CD4-positive, alpha-beta memory T cell (primary cell): ENCODE measurements at regions of chr19 and their contacts with region 1.

Region 1: DNA sequence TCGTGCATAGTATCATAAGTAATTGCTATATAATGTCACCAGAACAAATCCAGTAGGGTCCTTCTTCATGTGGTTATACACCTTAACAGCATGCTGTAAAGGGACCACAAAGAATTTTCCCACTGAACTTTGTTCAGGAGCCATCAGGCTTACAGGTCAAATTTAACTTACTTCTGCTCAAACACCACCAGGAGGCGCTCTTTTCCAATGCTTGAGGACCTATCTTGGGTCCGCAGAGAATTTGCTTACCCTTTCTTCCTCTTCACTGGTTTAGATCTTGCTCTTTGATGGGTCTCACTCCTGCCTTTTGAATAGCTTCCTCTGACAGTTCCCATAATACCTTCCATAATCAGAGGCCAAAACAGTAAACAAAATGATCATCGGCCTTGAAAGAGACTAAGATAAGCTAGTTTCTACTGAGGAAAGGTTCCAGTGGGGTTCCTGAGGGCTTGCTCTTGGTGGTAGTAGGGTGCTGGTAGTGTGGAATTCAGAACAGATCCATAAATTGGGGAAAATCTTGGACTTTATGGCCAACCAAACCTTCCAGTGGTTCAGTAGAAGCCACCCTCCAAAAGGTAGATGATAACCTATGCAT is 37.4 kb downstream of the SCGB2B2 start:
- DNase-seq: peak; percentile 52 to 66 (median 62)
- H3K4me3 ChIP-seq: no peak overlapping the region
- H3K4me3 Mint-ChIP-seq: no peak overlapping the region
- H3K27ac ChIP-seq: no peak overlapping the region
- H3K27ac Mint-ChIP-seq: no peak overlapping the region
- H3K4me1 ChIP-seq: no peaks in the 10 kb centered on the region
- H3K4me1 Mint-ChIP-seq: peaks cover 0 to 3% (median 0%) of the 10 kb centered on the region in 4 donors
- H3K27me3 ChIP-seq: no peaks in the 10 kb centered on the region
- H3K27me3 Mint-ChIP-seq: no peaks in the 10 kb centered on the region

Region 2: GRCh38 chr19:34588249-34588648 is 51.3 kb before region 1 on chr19:
- CTCF ChIA-PET with region 1: no interaction called
- POLR2A ChIA-PET with region 1: no interaction called
- intact Hi-C with region 1: no loop called
- DNase-seq: no peak
- H3K4me3 ChIP-seq: no peak overlapping the region
- H3K4me3 Mint-ChIP-seq: no peak overlapping the region
- H3K27ac ChIP-seq: no peak overlapping the region
- H3K27ac Mint-ChIP-seq: no peak overlapping the region
- H3K4me1 ChIP-seq: no peaks in the 10 kb centered on the region
- H3K4me1 Mint-ChIP-seq: no peaks in the 10 kb centered on the region
- H3K27me3 ChIP-seq: no peaks in the 10 kb centered on the region
- H3K27me3 Mint-ChIP-seq: no peaks in the 10 kb centered on the region

Region 3: GRCh38 chr19:34654796-34655195 is 15.2 kb after region 1 on chr19:
- CTCF ChIA-PET with region 1: interaction called, 16 read pairs
- POLR2A ChIA-PET with region 1: no interaction called
- intact Hi-C with region 1: no loop called
- DNase-seq: no peak
- H3K4me3 ChIP-seq: no peak overlapping the region
- H3K4me3 Mint-ChIP-seq: no peak overlapping the region
- H3K27ac ChIP-seq: no peak overlapping the region
- H3K27ac Mint-ChIP-seq: no peak overlapping the region
- H3K4me1 ChIP-seq: no peaks in the 10 kb centered on the region
- H3K4me1 Mint-ChIP-seq: peaks cover 0 to 3% (median 0%) of the 10 kb centered on the region in 4 donors
- H3K27me3 ChIP-seq: no peaks in the 10 kb centered on the region
- H3K27me3 Mint-ChIP-seq: peaks cover 2 to 17% of the 10 kb centered on the region in 2 donors

Region 4: GRCh38 chr19:34712395-34713261 is 73.0 kb after region 1 on chr19:
- CTCF ChIA-PET with region 1: interaction called, 144 read pairs
- POLR2A ChIA-PET with region 1: no interaction called
- intact Hi-C with region 1: loop called (anchors 1 kb)
- DNase-seq: peak; percentile 64 to 74 (median 71)
- H3K4me3 ChIP-seq: no peak overlapping the region
- H3K4me3 Mint-ChIP-seq: no peak overlapping the region
- H3K27ac ChIP-seq: no peak overlapping the region
- H3K27ac Mint-ChIP-seq: no peak overlapping the region
- H3K4me1 ChIP-seq: no peaks in the 10 kb centered on the region
- H3K4me1 Mint-ChIP-seq: peaks cover 0 to 1% (median under 1%) of the 10 kb centered on the region in 4 donors
- H3K27me3 ChIP-seq: no peaks in the 10 kb centered on the region
- H3K27me3 Mint-ChIP-seq: peaks cover 15 to 17% of the 10 kb centered on the region in 2 donors